MCF 10A (cell line): ENCODE measurements at regions of chr3 and their contacts with region 1.

Region 1: GRCh38 chr3:42101048-42101447 is 9.9 kb downstream of the TRAK1 start:
- DNase-seq: peak; percentile 73
- H3K4me3 Mint-ChIP-seq: no peak overlapping the region
- H3K27ac Mint-ChIP-seq: peak overlapping the region; percentile 88
- H3K4me1 Mint-ChIP-seq: peaks cover 49% of the 10 kb centered on the region
- H3K27me3 Mint-ChIP-seq: no peaks in the 10 kb centered on the region
- CTCF ChIP-seq: no peak

Region 2: GRCh38 chr3:40580494-40581091 is 1520.5 kb before region 1 on chr3:
- CTCF ChIA-PET with region 1: interaction called, 20 read pairs
- POLR2A ChIA-PET with region 1: no interaction called
- intact Hi-C with region 1: loop called (anchors 2 kb)
- DNase-seq: peak; percentile 77
- H3K4me3 Mint-ChIP-seq: no peak overlapping the region
- H3K27ac Mint-ChIP-seq: no peak overlapping the region
- H3K4me1 Mint-ChIP-seq: peaks cover 10% of the 10 kb centered on the region
- H3K27me3 Mint-ChIP-seq: peaks cover 10% of the 10 kb centered on the region
- CTCF ChIP-seq: peak; percentile 88

Region 3: GRCh38 chr3:41933146-41933676 is 167.8 kb before region 1 on chr3:
- CTCF ChIA-PET with region 1: interaction called, 10 read pairs
- POLR2A ChIA-PET with region 1: interaction called, 5 read pairs
- intact Hi-C with region 1: no loop called
- DNase-seq: peak; percentile 81
- H3K4me3 Mint-ChIP-seq: no peak overlapping the region
- H3K27ac Mint-ChIP-seq: no peak overlapping the region
- H3K4me1 Mint-ChIP-seq: no peaks in the 10 kb centered on the region
- H3K27me3 Mint-ChIP-seq: no peaks in the 10 kb centered on the region
- CTCF ChIP-seq: no peak

Region 4: DNA sequence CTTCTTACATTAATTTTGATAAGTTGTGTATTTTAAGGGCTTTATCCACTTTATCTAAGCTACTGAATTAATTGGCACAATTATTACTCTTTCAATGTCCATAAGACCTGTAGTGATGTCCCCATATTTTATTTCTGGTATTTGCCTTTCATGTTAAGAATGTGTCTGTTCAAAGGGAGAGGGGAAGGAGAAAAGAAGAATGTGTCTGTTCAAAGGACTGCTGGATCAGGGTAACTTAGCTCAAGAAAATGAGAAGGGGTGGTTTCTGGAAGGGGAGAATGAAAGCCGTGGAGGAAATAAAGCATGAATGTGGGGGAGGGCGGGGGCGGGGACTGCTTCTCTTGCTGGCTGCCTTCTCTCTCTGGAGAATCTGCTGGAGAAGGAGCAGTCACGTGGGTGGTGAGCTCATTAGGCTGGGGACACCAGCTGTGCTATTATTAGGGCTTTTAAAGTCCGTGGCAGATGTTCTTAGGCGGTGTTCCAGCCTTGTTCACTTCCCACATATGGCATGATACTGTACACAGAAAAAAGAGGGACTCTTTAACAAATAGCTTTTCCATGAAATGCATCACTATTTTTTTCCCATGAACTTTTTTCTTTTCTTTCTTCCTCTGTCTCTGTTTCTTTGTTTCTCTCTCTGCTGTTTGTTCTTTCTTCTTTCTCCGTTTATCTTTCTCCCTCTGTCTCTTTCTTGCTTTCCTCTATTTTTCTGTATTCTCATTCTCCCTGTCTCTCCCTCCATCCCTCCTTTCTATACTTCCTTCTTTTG is 75.5 kb before region 1 on chr3:
- CTCF ChIA-PET with region 1: interaction called, 31 read pairs
- POLR2A ChIA-PET with region 1: interaction called, 9 read pairs
- intact Hi-C with region 1: no loop called
- DNase-seq: peak; percentile 72
- H3K4me3 Mint-ChIP-seq: peak overlapping the region; percentile 17
- H3K27ac Mint-ChIP-seq: peak overlapping the region; percentile 66
- H3K4me1 Mint-ChIP-seq: peaks cover 50% of the 10 kb centered on the region
- H3K27me3 Mint-ChIP-seq: no peaks in the 10 kb centered on the region
- CTCF ChIP-seq: no peak

Region 5: GRCh38 chr3:42080452-42080891 is 20.6 kb before region 1 on chr3:
- CTCF ChIA-PET with region 1: interaction called, 34 read pairs
- POLR2A ChIA-PET with region 1: interaction called, 4 read pairs
- intact Hi-C with region 1: no loop called
- DNase-seq: peak; percentile 84
- H3K4me3 Mint-ChIP-seq: peak overlapping the region; percentile 37
- H3K27ac Mint-ChIP-seq: peak overlapping the region; percentile 97
- H3K4me1 Mint-ChIP-seq: peaks cover 28% of the 10 kb centered on the region
- H3K27me3 Mint-ChIP-seq: no peaks in the 10 kb centered on the region
- CTCF ChIP-seq: no peak

Region 6: DNA sequence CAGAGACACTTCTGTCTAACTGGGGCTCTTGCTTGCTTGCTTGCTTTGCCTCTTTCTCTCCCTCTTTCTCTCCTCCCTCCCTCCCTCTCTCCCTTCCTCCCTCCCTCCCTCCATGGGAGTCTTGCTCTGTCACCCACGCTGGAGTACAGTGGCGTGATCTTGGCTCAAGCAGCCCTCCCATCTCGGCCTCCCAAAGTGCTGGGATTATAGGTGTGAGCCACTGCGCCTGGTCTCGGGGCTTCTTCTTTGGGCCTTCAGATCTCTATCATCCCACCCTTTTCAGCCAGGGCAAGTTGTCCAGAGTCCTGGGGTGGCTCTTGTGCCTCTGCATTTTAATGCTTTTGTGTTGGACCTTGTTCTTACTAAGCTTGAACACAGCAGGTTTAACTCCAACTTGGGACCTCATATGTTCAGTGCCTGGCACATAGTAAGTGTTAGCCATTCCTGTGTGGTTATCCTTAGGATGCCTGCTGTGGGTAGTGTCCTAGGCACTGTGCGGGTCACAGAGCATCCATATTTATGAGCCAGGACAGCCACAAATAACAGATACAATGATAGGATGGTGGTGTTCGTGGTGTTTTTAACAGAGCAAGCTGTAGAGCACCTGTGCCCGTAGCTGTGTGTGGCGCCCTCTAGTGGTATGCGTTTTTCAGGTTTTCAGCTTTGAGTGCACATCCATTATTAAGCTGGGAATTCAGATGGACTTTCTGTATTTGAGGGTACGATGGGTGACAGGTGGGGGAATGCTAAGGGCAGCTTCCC is 89.8 kb after region 1 on chr3:
- CTCF ChIA-PET with region 1: interaction called, 56 read pairs
- POLR2A ChIA-PET with region 1: no interaction called
- intact Hi-C with region 1: no loop called
- DNase-seq: peak; percentile 78
- H3K4me3 Mint-ChIP-seq: no peak overlapping the region
- H3K27ac Mint-ChIP-seq: no peak overlapping the region
- H3K4me1 Mint-ChIP-seq: no peaks in the 10 kb centered on the region
- H3K27me3 Mint-ChIP-seq: no peaks in the 10 kb centered on the region
- CTCF ChIP-seq: peak; percentile 85

Region 7: DNA sequence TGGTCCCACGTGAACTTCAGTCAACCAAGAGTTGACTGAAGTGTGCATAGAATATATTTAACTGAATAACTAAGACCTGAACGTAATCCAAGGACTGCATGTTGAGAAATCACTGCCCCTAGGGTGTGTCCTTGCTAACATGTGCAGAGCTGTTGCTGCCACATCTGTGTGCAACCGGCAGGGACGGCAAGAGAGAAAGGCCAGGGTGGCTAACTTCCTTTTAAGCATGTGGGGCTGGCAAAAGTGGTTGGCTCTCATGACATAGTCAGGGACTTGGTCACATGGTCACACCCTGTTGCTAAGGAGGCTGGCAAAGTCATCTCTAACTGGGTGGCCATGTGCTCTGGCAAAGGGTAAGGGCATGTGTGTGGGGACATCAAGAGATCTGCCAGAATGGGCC is 930.4 kb after region 1 on chr3:
- CTCF ChIA-PET with region 1: no interaction called
- POLR2A ChIA-PET with region 1: no interaction called
- intact Hi-C with region 1: no loop called
- DNase-seq: peak; percentile 63
- H3K4me3 Mint-ChIP-seq: no peak overlapping the region
- H3K27ac Mint-ChIP-seq: no peak overlapping the region
- H3K4me1 Mint-ChIP-seq: peaks cover 13% of the 10 kb centered on the region
- H3K27me3 Mint-ChIP-seq: peaks cover 13% of the 10 kb centered on the region
- CTCF ChIP-seq: no peak